ENCODE measurements at regions of chr6 and their contacts with region 1.

Region 1: GRCh38 chr6:21109391-21110178 is 484.0 kb upstream of the SOX4 start:
- DNase-seq: peak; percentile 45
- ATAC-seq: peak; percentile 92
- H3K4me3 ChIP-seq: no peak overlapping the region
- H3K27ac ChIP-seq: peak overlapping the region; percentile 93
- H3K4me1 ChIP-seq: peaks cover 40% of the 10 kb centered on the region
- H3K27me3 ChIP-seq: no peaks in the 10 kb centered on the region
- CTCF ChIP-seq: no peak

Region 2: DNA sequence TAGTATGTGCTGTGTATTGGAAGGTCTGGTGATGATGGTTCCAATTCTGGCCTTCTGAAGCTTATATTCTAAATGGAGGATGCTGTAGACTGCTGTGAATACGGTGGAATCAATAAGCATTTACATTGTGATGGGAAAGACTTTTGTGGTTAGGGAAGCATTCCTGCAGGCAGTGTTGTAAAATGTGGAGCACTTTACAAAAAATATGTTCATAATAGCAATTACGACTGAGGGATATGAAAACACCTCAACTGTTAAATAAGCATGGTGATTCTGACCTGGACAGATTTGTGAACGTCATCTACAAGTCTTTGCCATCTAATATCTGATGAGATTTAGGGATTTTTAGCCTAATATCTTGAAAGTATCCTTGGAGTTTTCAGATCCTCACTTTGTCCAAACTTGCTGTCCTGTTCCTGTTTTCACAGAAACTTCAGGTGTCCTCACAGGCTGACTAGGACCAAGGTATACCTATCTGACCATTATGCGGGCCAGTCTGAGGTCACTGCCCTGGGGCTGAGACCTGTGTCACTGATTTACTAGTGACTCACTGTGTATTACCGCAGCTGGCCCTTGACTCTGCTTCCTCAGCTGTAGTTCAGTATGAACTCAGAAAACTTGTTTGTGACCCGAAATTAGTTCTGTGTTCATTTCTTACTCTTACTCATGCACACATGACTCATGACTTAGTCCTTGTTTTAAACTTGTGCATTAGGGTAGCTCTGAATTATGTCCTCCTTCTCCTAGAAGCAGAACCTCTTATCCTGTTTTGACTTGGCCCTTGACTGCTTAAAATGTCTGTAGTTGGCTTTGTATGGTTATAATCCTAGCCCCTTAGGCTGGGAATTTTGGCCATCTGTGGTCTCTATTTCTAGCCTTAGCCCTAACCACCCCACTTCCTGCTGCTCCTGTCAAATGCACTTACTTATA is 232.3 kb before region 1 on chr6:
- CTCF ChIA-PET with region 1: no interaction called
- POLR2A ChIA-PET with region 1: no interaction called
- in situ Hi-C with region 1: no loop called
- intact Hi-C with region 1: loop called (anchors 10 kb)
- DNase-seq: peak; percentile 93
- ATAC-seq: peak; percentile 100
- H3K4me3 ChIP-seq: 0 out of 4 replicates have a peak overlapping the region, but pooled peaks of 1 of the 2 experiments have one; percentile 5
- H3K27ac ChIP-seq: peak overlapping the region; percentile 83
- H3K4me1 ChIP-seq: peaks cover 24% of the 10 kb centered on the region
- H3K27me3 ChIP-seq: no peaks in the 10 kb centered on the region
- CTCF ChIP-seq: no peak

Region 3: DNA sequence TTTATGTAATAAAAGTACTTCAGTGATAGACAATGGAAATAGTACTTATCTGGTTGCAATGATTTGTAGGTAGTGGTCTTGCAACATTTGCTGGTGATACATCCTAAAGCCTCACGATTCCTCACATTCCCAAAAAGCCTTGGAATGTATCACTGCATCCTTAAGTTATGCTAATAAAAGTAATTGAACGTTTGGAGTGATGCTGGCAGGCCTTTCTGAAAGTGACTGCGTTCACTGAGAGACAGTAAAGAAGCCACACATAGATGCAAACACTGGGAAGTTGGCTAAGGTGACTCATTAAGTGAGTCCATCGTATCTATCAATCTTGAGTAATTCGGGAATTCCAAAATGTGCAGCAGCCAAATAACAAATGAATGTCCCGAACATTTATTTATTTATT is 39.9 kb after region 1 on chr6:
- CTCF ChIA-PET with region 1: no interaction called
- POLR2A ChIA-PET with region 1: no interaction called
- in situ Hi-C with region 1: no loop called
- intact Hi-C with region 1: no loop called
- DNase-seq: no peak
- ATAC-seq: no peak
- H3K4me3 ChIP-seq: no peak overlapping the region
- H3K27ac ChIP-seq: no peak overlapping the region
- H3K4me1 ChIP-seq: no peaks in the 10 kb centered on the region
- H3K27me3 ChIP-seq: no peaks in the 10 kb centered on the region
- CTCF ChIP-seq: no peak